ENCODE measurements at regions of chr17 and their contacts with region 1.

Region 1: DNA sequence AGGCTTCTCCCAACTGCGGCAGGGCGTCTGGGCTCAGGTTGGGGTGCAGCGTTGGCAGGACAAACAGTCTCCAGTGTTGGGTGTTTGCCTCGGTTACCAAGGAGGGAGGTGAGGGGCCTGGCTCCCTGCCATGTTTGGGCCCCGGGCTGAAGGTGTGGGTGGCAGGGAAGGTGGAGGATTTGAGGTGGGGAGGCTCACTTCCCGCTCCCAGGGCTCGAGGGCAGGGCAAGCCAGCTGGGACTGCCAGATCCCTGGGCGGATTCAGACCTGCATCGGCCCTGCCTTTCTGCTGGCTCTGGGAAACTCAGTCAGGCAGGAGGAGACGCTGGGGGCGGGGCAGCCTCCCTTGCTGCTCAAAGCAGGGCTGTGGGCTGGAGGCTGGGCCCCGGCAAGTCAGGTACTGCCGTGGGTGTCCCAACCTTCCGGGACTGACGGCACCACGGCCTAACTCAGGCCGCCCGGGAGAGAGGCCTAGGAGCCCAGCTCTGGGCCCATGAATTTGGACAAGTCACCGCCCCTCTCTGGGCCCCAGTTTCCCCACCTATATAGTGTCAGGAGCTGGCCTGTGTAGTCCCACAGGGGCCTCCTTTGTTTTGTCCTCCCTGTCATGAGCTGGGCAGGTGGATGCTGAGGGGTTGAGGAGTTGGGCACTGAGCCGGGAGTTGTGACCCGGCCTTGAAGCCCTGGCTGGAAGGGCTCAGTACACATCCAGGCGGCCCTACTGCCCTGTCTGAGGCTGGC is 31.4 kb upstream of the KRT17 start:
- DNase-seq: peak; percentile 100
- H3K4me3 ChIP-seq: no peak overlapping the region
- H3K27ac ChIP-seq: peak overlapping the region; percentile 100
- H3K4me1 ChIP-seq: peaks cover 92% of the 10 kb centered on the region
- H3K27me3 ChIP-seq: no peaks in the 10 kb centered on the region
- CTCF ChIP-seq: no peak

Region 2: GRCh38 chr17:40956401-40957254 is 699.2 kb before region 1 on chr17:
- CTCF ChIA-PET with region 1: no interaction called
- dilution Hi-C with region 1: no loop called
- in situ Hi-C with region 1: no loop called
- intact Hi-C with region 1: loop called (anchors 1 kb)
- DNase-seq: peak; percentile 99
- H3K4me3 ChIP-seq: no peak overlapping the region
- H3K27ac ChIP-seq: peak overlapping the region; percentile 99
- H3K4me1 ChIP-seq: peaks cover 75% of the 10 kb centered on the region
- H3K27me3 ChIP-seq: no peaks in the 10 kb centered on the region
- CTCF ChIP-seq: no peak

Region 3: DNA sequence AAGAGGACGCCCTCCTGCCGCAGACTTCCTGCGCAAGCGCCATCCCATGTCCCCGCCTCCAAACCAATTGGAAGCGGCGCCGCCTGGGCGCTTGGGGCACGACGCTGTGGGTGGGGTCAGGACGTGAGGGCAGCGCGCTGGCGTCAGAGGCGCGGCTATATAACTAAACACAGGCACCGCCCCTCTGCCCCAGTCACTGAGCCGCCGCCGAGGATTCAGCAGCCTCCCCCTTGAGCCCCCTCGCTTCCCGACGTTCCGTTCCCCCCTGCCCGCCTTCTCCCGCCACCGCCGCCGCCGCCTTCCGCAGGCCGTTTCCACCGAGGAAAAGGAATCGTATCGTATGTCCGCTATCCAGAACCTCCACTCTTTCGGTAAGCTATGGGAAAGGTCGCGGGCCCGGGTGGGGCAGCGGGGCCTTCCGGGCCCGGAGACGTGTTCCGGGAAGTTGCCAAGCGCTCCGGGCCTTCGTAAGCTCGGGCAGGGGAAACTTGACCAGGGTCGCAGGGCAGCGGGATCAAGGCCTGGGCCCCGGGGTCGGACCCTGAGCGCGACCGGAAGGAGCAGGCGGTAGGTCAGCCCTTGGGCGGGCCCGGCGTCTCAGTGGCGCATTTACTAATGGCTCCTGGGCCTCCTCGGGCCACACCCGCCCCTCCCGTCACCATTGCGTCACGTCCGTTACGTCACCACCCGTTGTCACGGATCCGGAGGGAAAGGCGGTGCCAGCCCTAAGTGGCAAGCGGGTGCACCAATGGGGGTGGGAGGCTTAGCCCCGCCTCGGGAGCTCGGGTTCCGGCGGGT is 33.1 kb after region 1 on chr17 and contains the start of gene EIF1:
- CTCF ChIA-PET with region 1: no interaction called
- dilution Hi-C with region 1: no loop called
- in situ Hi-C with region 1: no loop called
- intact Hi-C with region 1: loop called (anchors 1 kb)
- DNase-seq: peak; percentile 100
- H3K4me3 ChIP-seq: peak within 1 kb of the TSS; percentile 56 to 76 (median 74)
- H3K27ac ChIP-seq: peak within 1 kb of the TSS; percentile 96
- H3K4me1 ChIP-seq: peaks cover 19% of the 10 kb centered on the region
- H3K27me3 ChIP-seq: no peaks in the 10 kb centered on the region
- CTCF ChIP-seq: no peak
- total RNA-seq, gene EIF1: 78.9 to 981 TPM

Region 4: DNA sequence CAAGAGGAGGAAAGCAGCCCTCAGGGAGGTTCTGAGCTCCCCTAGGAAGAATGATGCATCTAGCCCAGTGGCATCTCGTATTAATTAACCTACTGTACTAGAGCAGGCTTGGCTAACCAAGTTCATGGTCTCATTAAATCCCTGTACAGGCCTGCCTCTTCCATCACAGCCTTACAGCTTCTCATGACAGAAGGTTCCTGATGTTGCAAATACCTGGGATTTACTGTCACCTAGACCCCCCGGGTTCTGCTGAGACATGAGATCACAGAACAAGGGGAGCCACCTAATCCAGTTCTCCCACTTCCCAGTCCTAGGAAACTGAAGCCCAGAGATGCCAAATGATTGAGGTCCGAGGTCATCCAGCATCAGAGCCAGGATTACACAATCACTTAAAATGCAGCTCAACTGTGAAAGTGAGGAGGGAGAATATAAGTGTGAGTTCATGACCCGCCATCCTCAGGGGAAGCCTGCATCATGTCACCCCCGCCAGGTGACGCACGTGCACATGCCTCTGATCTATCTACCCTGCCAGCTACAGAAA is 239.1 kb after region 1 on chr17:
- CTCF ChIA-PET with region 1: no interaction called
- dilution Hi-C with region 1: no loop called
- in situ Hi-C with region 1: no loop called
- intact Hi-C with region 1: no loop called
- DNase-seq: no peak
- H3K4me3 ChIP-seq: no peak overlapping the region
- H3K27ac ChIP-seq: no peak overlapping the region
- H3K4me1 ChIP-seq: no peaks in the 10 kb centered on the region
- H3K27me3 ChIP-seq: no peaks in the 10 kb centered on the region
- CTCF ChIP-seq: no peak